Gastrocnemius medialis (tissue), 4 donors: ENCODE measurements at regions of chr10 and their contacts with region 1.

Region 1: DNA sequence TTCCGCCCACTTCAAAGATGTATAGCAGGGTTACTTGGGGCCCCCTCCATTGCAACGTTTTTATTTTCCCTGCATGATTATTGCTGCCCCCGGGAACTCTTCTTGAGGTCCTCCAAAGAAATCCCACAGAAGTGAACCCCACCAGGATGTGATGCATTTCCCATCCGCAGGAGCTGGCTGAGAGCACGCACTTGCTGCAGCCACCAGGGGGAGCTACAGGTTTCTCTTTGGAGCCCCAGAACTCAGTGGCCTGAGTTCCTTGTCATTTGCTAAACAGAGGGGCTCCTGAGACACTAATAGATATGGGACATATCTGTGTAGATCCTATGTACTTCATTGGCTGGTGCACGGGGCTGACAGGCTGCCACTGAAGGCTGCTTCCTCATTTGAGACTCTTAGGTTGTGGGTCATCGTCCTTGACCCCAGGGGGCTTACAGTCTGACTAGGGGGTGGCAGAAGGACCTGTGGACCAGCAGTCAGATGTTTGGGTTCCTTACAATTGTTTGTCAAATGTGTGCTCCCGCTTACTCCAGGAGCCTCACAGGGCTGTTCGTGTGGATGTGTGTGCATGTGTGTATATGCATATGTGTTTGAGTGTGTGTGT is 52.3 kb upstream of the ENO4 start:
- DNase-seq: peak; percentile 19 to 30
- ATAC-seq: peak in 1 of 2 donors; percentile 54
- H3K4me3 ChIP-seq: no peak overlapping the region
- H3K27ac ChIP-seq: no peak overlapping the region
- H3K4me1 ChIP-seq: no peaks in the 10 kb centered on the region
- H3K27me3 ChIP-seq: peaks cover 0 to 7% (median 0%) of the 10 kb centered on the region in 3 donors
- CTCF ChIP-seq: peak; percentile 35 to 74 (median 66)
- POLR2A ChIP-seq: no peak

Region 2: GRCh38 chr10:116690356-116691322 is 106.4 kb before region 1 on chr10:
- in situ Hi-C with region 1: loop called in 1 of 4 experiments (anchors 5 kb)
- intact Hi-C with region 1: no loop called
- DNase-seq: no peak
- ATAC-seq: peak; percentile 47 to 62
- H3K4me3 ChIP-seq: no peak overlapping the region
- H3K27ac ChIP-seq: peak overlapping the region in 2 of 4 donors; percentile 9 to 10
- H3K4me1 ChIP-seq: peaks cover 8 to 10% of the 10 kb centered on the region in 2 donors
- H3K27me3 ChIP-seq: no peaks in the 10 kb centered on the region
- CTCF ChIP-seq: peak in 2 of 5 experiments; percentile 13 to 48
- POLR2A ChIP-seq: no peak

Region 3: GRCh38 chr10:117167789-117168674 is 371.0 kb after region 1 on chr10:
- in situ Hi-C with region 1: loop called in 1 of 4 experiments (anchors 5 kb)
- intact Hi-C with region 1: loop called (anchors 2 kb)
- DNase-seq: no peak
- ATAC-seq: peak; percentile 45 to 46
- H3K4me3 ChIP-seq: peak overlapping the region in 2 of 4 donors; percentile 11 to 36
- H3K27ac ChIP-seq: no peak overlapping the region
- H3K4me1 ChIP-seq: peaks cover 0 to 2% of the 10 kb centered on the region in 2 donors
- H3K27me3 ChIP-seq: peaks cover 89 to 95% (median 92%) of the 10 kb centered on the region in 3 donors
- CTCF ChIP-seq: peak in 4 of 5 experiments; percentile 58 to 70 (median 68)
- POLR2A ChIP-seq: no peak

Region 4: GRCh38 chr10:117174439-117175214 is 377.6 kb after region 1 on chr10:
- in situ Hi-C with region 1: loop called (anchors 5 kb)
- intact Hi-C with region 1: loop called (anchors 2 kb)
- DNase-seq: peak; percentile 26 to 30
- ATAC-seq: peak; percentile 56 to 71
- H3K4me3 ChIP-seq: peak overlapping the region; percentile 25 to 45 (median 38)
- H3K27ac ChIP-seq: no peak overlapping the region
- H3K4me1 ChIP-seq: peaks cover 5 to 7% of the 10 kb centered on the region in 2 donors
- H3K27me3 ChIP-seq: peaks cover 34 to 53% (median 47%) of the 10 kb centered on the region in 3 donors
- CTCF ChIP-seq: peak; percentile 32 to 72 (median 59)
- POLR2A ChIP-seq: no peak